GM12878 (cell line): ENCODE measurements at regions of chr13 and their contacts with region 1.

Region 1: DNA sequence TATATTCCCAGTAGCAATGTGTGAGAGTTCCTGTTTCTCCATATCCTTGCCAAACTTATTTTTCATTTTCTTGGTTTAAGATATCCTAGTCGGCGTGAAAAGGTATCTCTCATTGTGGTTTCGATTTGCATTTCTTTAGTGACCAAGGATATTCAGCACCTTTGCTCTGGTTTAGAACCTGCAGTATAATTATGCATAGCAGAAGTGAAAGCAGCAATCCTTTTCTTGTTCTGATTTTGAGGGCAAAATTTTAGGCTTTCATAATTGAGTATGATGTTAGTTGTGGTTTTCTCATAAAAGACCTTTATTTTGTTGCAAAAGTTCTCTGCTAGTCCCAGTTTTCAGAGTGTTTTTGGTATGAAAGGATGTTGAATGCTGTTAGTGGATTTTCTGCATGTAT is 491.0 kb downstream of the FGF9 start:
- DNase-seq: peak; percentile 74
- ATAC-seq: peak; percentile 93
- H3K4me3 ChIP-seq: peak overlapping the region; percentile 41; the same call in 1 of the 2 replicates
- H3K27ac ChIP-seq: peak overlapping the region; percentile 64
- H3K4me1 ChIP-seq: peaks cover 16% of the 10 kb centered on the region
- H3K27me3 ChIP-seq: no peaks in the 10 kb centered on the region
- CTCF ChIP-seq: no peak
- EP300 ChIP-seq: peak; percentile 87 to 98; a peak in 3 of 4 replicates
- POLR2A ChIP-seq: no peak
- RAD21 ChIP-seq: no peak

Region 2: GRCh38 chr13:22114630-22115311 is 47.1 kb before region 1 on chr13:
- CTCF ChIA-PET with region 1: no interaction called
- POLR2A ChIA-PET with region 1: no interaction called
- RAD21 ChIA-PET with region 1: interaction called, 6 read pairs
- SMC1A ChIA-PET with region 1: interaction called, 6 read pairs
- in situ Hi-C with region 1: no loop called
- intact Hi-C with region 1: loop called (anchors 1 kb)
- DNase-seq: peak; percentile 99
- ATAC-seq: peak; percentile 92
- H3K4me3 ChIP-seq: no peak overlapping the region
- H3K27ac ChIP-seq: peak overlapping the region; percentile 78
- H3K4me1 ChIP-seq: peaks cover 18% of the 10 kb centered on the region
- H3K27me3 ChIP-seq: no peaks in the 10 kb centered on the region
- CTCF ChIP-seq: no peak
- EP300 ChIP-seq: peak; percentile 99 to 100
- POLR2A ChIP-seq: peak; percentile 58; the same call in 1 of the 2 replicates
- RAD21 ChIP-seq: peak; percentile 17; the same call in 1 of the 2 replicates

Region 3: DNA sequence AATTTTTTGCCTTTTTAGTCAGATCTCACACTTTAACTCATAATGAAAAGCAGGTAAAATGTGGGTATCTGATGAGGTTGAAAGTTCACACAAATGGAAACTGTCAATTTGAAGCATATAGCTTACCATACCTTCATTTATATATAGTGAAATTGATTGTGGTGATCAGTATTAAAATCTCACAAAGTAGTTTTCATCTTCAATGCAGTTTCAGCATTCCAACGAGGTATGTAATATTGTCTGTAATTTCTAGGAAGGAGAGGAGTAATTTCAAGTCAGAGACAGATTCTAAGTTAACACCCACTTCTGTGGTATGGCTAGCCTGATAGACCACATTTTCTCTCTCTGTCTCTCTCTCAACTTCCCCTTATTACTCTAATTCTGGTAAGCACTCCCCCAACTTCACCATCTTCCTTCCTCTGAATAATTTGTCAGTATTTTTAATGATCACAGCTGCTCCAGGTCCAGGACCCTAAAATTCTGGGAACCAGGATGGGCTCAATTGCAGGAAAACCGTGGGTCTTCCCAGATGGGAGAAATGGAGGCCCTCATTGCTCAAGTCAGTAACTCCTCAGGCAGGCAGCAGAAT is 35.3 kb before region 1 on chr13:
- CTCF ChIA-PET with region 1: no interaction called
- POLR2A ChIA-PET with region 1: no interaction called
- RAD21 ChIA-PET with region 1: no interaction called
- SMC1A ChIA-PET with region 1: interaction called, 6 read pairs
- in situ Hi-C with region 1: no loop called
- intact Hi-C with region 1: loop called (anchors 2 kb)
- DNase-seq: peak; percentile 51
- ATAC-seq: peak; percentile 98
- H3K4me3 ChIP-seq: no peak overlapping the region; the same call in 1 of the 2 replicates
- H3K27ac ChIP-seq: peak overlapping the region; percentile 55; the same call in 1 of the 2 replicates
- H3K4me1 ChIP-seq: peaks cover 23% of the 10 kb centered on the region
- H3K27me3 ChIP-seq: no peaks in the 10 kb centered on the region
- CTCF ChIP-seq: no peak
- EP300 ChIP-seq: peak in 1 of 2 experiments; percentile 61; a peak in 1 of 4 replicates
- POLR2A ChIP-seq: no peak
- RAD21 ChIP-seq: no peak